Mammary epithelial cell (primary cell): ENCODE measurements at regions of chr2 and their contacts with region 1.

Region 1: GRCh38 chr2:219352448-219353023 is 20.0 kb upstream of the RESP18 start:
- DNase-seq: peak; percentile 51
- H3K4me3 ChIP-seq: no peak overlapping the region
- H3K27ac ChIP-seq: no peak overlapping the region
- H3K4me1 ChIP-seq: no peaks in the 10 kb centered on the region
- H3K27me3 ChIP-seq: no peaks in the 10 kb centered on the region
- CTCF ChIP-seq: peak; percentile 73 to 75

Region 2: GRCh38 chr2:219160186-219161017 is 192.1 kb before region 1 on chr2 and contains the start of gene NHEJ1:
- CTCF ChIA-PET with region 1: no interaction called
- dilution Hi-C with region 1: no loop called
- in situ Hi-C with region 1: no loop called
- intact Hi-C with region 1: loop called (anchors 1 kb)
- DNase-seq: peak; percentile 88
- H3K4me3 ChIP-seq: peak within 1 kb of the TSS; percentile 74 to 91 (median 79)
- H3K27ac ChIP-seq: peak within 1 kb of the TSS; percentile 19
- H3K4me1 ChIP-seq: peaks cover 15% of the 10 kb centered on the region
- H3K27me3 ChIP-seq: no peaks in the 10 kb centered on the region
- CTCF ChIP-seq: peak; percentile 84 to 96
- total RNA-seq, gene NHEJ1: 10.4 to 13.3 TPM